ENCODE measurements at regions of chr20 and their contacts with region 1.

Region 1: DNA sequence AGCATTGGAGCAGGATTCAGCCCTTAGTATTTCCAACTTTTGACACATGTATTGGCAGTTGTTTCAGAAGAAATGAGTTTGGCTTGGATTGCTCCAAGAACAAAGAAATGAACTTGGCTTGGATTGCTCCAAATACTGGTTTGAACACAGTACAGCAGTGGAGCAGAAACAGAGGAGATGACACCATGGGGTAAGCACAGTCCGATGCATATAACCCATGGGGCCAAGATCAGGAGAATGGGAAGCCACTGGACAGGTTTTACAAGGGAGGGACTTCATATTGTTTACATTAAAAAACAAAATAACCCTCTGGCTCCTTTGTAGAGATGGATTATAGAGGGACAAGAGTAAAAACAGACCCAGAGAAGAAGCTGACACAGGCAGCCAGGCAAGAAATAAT is 32.5 kb downstream of the TMEM74B start:
- DNase-seq: no peak
- H3K4me3 Mint-ChIP-seq: no peak overlapping the region
- H3K27ac Mint-ChIP-seq: no peak overlapping the region
- H3K4me1 Mint-ChIP-seq: peaks cover 8% of the 10 kb centered on the region
- H3K27me3 Mint-ChIP-seq: no peaks in the 10 kb centered on the region

Region 2: DNA sequence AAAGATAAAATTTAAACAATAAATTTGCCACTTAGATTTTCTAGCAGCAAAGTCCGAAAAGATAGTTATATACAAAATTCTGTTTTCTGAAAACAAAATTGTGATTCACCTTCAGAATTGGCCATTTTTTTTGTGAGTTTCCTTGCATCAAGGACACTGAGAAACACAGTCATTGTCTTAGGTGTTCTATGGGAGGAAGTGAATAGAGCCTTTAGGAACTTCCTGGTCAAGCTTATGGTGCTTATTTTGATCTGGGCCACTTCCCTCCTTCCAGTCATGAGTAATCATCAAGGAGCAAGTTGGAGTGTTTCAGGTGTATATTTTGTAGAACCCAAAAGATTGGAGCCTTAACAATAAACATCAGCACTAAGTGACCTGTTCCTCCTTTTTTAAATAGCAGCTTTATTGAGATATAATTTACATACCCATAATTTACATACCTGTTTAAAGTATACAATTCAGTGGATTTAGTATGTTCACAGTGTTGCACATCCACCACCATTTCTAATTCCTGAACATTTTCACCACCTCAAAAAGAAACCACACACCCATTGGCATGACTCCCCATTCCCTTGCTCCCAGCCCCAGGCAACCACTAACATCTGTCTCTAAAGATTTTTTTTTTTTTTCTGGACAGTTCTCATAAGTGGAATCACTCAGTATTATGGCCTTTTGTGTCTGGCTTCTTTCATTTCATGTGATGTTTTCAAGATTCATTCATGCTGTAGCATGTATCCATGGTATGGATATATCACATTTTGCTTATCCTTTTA is 14.8 kb after region 1 on chr20:
- CTCF ChIA-PET with region 1: no interaction called
- POLR2A ChIA-PET with region 1: interaction called, 13 read pairs
- DNase-seq: no peak
- H3K4me3 Mint-ChIP-seq: no peak overlapping the region
- H3K27ac Mint-ChIP-seq: no peak overlapping the region
- H3K4me1 Mint-ChIP-seq: no peaks in the 10 kb centered on the region
- H3K27me3 Mint-ChIP-seq: no peaks in the 10 kb centered on the region